Activated naive CD4-positive, alpha-beta T cell treated with anti-CD3 and anti-CD28 coated beads for 36 hours (primary cell): ENCODE measurements at regions of chr7 and their contacts with region 1.

Region 1: DNA sequence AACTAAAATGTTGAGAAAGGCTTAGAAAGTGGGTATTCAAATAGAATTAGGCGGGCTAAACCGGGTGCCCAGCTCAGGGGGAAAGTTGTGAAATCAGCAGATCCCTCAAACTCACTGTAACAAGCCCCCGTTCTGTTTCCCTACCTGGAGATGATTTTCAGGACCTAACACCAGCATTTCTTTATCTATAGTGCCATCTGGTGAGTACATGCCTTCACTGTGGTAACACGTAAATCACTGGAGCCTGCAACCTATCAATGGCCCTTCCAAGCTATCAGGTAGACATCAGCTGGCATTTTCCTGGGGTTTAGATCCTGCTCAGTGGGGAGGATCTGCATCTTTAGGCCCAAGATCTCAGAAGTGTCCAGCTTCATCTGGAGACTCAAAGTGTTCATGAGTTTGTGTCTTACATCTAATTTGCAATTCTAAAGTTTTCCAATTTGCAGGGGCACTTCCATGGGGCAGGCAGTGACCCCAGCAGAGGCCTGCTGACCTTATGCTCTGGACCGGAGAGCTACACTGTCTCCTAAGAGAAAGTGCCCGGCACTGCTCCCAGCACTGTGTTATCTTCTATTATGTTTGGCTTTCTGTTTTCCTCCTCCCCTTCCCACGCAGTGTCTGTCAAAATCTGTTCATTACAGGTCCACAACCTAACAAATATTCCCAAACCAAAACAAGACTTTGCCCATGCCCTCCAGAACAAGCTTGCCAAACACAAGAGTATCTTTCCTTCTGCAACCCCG is 132.5 kb downstream of the LSM5 start:
- DNase-seq: no peak
- H3K4me3 Mint-ChIP-seq: no peak overlapping the region
- H3K27ac Mint-ChIP-seq: no peak overlapping the region
- H3K4me1 Mint-ChIP-seq: no peaks in the 10 kb centered on the region
- H3K27me3 Mint-ChIP-seq: peaks cover 12% of the 10 kb centered on the region

Region 2: DNA sequence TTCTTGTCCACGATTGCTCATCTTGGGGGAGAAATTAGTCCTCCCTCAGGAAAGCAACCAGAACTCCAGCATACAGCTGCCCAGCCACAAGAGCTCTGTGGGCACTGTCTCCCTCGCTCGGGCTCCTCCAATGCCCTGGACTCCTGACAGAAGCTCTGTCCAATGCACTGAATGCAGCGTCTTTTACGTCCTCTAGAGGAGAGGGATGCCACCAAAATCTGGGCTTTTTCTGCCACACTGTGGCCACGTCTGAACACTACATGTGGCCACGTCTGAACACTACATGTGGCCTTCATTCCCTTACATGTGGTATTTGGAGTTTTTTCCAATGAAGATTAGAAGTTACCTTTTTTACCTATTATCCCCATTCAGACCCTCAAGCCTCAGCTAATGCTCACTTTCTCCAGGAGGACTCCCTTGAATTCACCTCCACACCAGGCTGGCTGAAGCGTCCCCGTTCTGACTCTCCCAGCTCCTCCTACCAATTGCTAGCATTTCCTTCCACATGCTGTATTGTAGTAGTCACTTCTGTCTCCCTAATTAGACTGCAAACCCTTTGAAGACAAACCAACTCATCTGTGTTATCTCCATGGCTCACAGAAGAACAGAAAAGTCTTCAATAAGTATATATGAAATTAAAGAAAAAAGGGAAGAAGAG is 153.2 kb before region 1 on chr7:
- CTCF ChIA-PET with region 1: interaction called, 14 read pairs
- intact Hi-C with region 1: no loop called
- DNase-seq: peak; percentile 25
- H3K4me3 Mint-ChIP-seq: no peak overlapping the region
- H3K27ac Mint-ChIP-seq: no peak overlapping the region
- H3K4me1 Mint-ChIP-seq: no peaks in the 10 kb centered on the region
- H3K27me3 Mint-ChIP-seq: peaks cover 9% of the 10 kb centered on the region